ENCODE measurements at regions of chr3 and their contacts with region 1.

Region 1: GRCh38 chr3:129934234-129935123 is 40.0 kb upstream of the TRH start:
- DNase-seq: peak in 1 of 2 experiments; percentile 26
- H3K4me3 ChIP-seq: no peak overlapping the region
- H3K27ac ChIP-seq: no peak overlapping the region
- H3K4me1 ChIP-seq: no peaks in the 10 kb centered on the region
- H3K27me3 ChIP-seq: no peaks in the 10 kb centered on the region
- CTCF ChIP-seq: peak; percentile 98

Region 2: GRCh38 chr3:129383292-129383860 is 551.1 kb before region 1 on chr3:
- CTCF ChIA-PET with region 1: no interaction called
- POLR2A ChIA-PET with region 1: no interaction called
- intact Hi-C with region 1: loop called (anchors 1 kb)
- DNase-seq: peak; percentile 49 to 66
- H3K4me3 ChIP-seq: no peak overlapping the region
- H3K27ac ChIP-seq: no peak overlapping the region
- H3K4me1 ChIP-seq: peaks cover 6% of the 10 kb centered on the region
- H3K27me3 ChIP-seq: no peaks in the 10 kb centered on the region
- CTCF ChIP-seq: peak; percentile 85

Region 3: DNA sequence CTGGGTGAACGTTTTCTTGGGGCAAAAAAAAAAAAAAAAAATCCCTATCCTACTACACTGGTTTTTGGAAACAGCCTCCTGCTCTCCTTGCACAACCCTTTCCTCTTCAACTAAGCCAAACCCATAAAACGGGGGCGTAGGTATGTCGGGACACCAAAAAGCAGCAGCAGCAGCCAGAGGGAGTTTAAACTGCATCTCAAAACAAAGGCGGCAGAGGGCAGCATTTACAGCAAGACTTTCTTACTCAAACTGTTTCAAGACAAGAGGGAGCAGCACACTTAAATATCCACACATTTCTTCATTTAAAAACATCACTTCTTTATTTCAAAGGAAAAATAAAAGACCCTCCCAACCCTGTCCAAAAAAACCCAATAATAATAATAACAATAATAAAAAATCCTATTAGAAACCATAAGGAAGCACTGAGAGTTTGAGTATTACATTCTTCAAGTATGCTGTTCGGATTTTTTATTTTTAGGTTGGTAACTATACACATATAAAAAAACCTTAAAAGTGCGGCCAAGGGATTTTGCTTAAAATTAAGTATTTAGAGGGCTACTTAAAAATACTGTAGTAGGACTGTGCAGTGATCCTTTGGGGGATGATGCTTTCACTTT is 284.1 kb before region 1 on chr3:
- CTCF ChIA-PET with region 1: interaction called, 5 read pairs
- POLR2A ChIA-PET with region 1: no interaction called
- intact Hi-C with region 1: loop called (anchors 2 kb)
- DNase-seq: peak; percentile 68 to 78
- H3K4me3 ChIP-seq: no peak overlapping the region
- H3K27ac ChIP-seq: peak overlapping the region; percentile 91
- H3K4me1 ChIP-seq: peaks cover 64% of the 10 kb centered on the region
- H3K27me3 ChIP-seq: no peaks in the 10 kb centered on the region
- CTCF ChIP-seq: peak; percentile 83

Region 4: GRCh38 chr3:129893581-129894070 is 40.9 kb before region 1 on chr3 and contains the start of gene TMCC1:
- CTCF ChIA-PET with region 1: no interaction called
- POLR2A ChIA-PET with region 1: no interaction called
- intact Hi-C with region 1: loop called (anchors 2 kb)
- DNase-seq: peak; percentile 83 to 96
- H3K4me3 ChIP-seq: peak within 1 kb of the TSS; percentile 100
- H3K27ac ChIP-seq: peak within 1 kb of the TSS; percentile 88
- H3K4me1 ChIP-seq: peaks cover 41% of the 10 kb centered on the region
- H3K27me3 ChIP-seq: no peaks in the 10 kb centered on the region
- CTCF ChIP-seq: no peak
- total RNA-seq, gene TMCC1: 41.4 and 48.1 TPM in 2 replicates

Region 5: DNA sequence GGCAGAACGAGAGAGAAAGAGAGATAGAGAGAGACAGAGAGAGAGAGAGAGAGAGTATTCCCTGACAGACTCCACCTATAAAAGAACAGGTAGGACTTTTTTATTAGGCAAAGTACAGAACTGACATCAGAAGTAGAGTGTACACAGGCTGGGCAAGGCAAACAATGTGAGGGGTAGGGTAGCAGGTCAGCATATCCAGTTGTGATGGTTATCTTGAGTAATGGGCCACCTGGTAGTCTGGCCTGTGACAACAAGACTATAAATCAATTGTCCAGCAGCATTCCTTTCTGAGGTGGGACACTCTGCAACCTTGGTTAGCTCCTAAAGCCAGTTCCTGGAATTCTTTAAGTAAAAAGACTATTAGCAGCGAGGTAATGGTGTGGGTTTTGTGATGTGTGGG is 26.1 kb before region 1 on chr3:
- CTCF ChIA-PET with region 1: no interaction called
- POLR2A ChIA-PET with region 1: no interaction called
- intact Hi-C with region 1: loop called (anchors 2 kb)
- DNase-seq: peak; percentile 74 to 95
- H3K4me3 ChIP-seq: peak overlapping the region; percentile 38; the same call in 1 of the 2 replicates
- H3K27ac ChIP-seq: peak overlapping the region; percentile 72
- H3K4me1 ChIP-seq: peaks cover 27% of the 10 kb centered on the region
- H3K27me3 ChIP-seq: no peaks in the 10 kb centered on the region
- CTCF ChIP-seq: no peak

Measured in PC-9 (cell line).